Adrenal gland (tissue), 19 donors: ENCODE measurements at regions of chr5 and their contacts with region 1.

Region 1: DNA sequence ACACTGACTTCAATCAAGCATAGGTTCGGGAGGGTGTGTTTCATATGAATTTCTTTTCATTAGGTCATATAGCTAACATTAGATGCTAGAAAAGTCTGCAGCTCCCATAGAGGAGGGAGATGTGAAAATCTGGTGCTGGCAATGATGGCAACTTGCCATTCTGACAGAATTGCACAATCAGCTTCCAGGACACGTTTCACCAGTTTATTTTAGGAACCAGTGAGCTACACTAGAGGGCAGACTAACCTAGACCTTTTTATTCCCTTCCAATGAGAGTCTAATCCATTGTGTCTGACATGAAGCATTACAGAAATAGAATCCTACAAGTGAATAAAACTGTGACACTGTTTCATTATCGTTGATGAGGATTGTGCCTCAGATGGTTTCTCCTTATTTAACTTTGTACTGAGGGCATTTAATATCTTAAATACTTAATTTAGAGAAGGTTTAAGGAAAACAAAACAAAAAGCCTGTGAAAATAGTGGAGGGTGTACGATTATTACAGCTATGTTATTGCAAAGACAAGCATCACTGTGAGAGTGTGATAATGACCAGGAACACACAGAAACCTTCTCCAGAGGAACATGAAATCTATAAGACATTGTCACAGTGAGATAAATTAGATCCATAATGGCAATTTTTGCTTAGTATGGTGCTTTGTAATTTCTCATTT is 363.3 kb upstream of the RPS23 start:
- DNase-seq: peak; percentile 73 to 94 (median 83)
- H3K4me3 ChIP-seq: no peak overlapping the region
- H3K27ac ChIP-seq: peak overlapping the region in 2 of 5 donors; percentile 25 to 35
- H3K4me1 ChIP-seq: peaks cover 8 to 27% of the 10 kb centered on the region in 2 donors
- H3K27me3 ChIP-seq: no peaks in the 10 kb centered on the region
- CTCF ChIP-seq: peak; percentile 41 to 92 (median 88)
- POLR2A ChIP-seq: no peak

Region 2: GRCh38 chr5:82364497-82364896 is 277.0 kb before region 1 on chr5:
- intact Hi-C with region 1: loop called (anchors 10 kb)
- DNase-seq: peak in 3 of 7 donors; percentile 39 to 50 (median 40)
- H3K4me3 ChIP-seq: no peak overlapping the region
- H3K27ac ChIP-seq: no peak overlapping the region
- H3K4me1 ChIP-seq: peaks cover 0 to 11% of the 10 kb centered on the region in 2 donors
- H3K27me3 ChIP-seq: no peaks in the 10 kb centered on the region
- CTCF ChIP-seq: peak in 5 of 6 experiments; percentile 36 to 60 (median 46)
- POLR2A ChIP-seq: no peak